ENCODE measurements at regions of chr2 and their contacts with region 1.

Region 1: DNA sequence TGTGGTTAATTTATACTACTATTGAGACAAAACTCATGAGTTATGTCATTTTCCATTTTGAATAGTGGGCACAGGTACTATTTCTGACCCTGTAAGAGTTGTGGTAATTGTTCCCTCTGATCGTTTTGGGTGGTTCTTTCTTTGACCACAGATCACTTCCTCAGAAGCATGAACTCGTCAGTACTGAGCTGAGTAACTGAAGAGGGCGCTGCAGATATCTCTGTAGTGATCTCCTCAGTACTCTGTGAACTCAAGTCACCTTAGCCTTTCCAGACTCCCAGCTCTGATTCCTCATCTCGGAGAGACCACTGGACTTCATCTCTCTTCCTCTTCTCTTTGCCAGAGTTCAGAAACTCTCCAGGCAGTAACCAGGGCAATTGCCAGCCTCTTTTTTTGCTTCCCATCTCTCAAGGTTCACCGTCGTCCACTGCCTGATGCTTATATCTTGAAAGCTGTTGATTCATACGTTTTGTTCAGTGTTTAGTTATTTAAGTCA is 9.4 kb upstream of the IL1RL1 start:
- DNase-seq: peak; percentile 88
- H3K4me3 Mint-ChIP-seq: peak overlapping the region; percentile 67
- H3K27ac Mint-ChIP-seq: peak overlapping the region; percentile 93
- H3K4me1 Mint-ChIP-seq: peaks cover 54% of the 10 kb centered on the region
- H3K27me3 Mint-ChIP-seq: peaks cover 2% of the 10 kb centered on the region

Region 2: DNA sequence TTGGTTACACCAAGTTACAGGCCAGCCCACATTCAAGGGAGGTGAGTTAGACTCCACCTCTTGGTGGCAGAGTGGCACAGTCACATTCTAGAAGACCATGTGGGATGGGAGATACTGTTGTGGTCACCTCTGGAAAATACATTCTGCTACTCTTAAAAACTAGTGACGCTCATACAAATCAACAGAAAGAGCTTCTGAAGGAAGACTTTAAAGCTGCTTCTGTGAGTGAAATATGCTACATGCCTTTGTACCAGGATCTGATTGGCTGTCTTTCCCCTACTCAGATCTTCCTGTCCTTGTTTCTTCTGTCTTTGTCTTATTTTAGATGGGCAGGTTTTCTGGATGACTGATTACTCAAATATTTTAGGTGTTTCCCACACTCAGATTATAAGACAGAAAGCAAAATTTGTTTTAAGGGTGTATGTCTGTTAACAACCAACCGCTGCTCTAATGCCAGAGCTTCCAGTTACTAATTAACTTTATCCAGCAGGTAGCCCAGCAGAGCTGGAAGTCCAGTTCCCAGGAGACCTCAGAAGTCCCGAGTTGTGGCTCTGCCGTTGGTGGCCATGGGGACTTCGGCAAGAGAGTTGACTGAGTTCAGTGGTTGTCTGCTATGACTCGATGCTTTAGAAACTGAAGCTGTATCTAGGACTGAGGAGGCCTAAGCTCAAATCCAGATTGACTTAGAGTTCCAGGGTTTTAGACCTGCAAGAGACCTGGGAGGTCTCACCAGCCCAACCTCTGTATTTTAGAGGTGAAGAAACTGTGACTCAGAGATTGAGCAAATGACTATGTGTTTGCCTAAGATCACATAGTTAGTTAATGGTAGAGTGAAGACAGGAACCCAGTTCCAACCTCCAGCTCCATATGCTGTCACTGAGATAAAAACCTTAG is 302.8 kb before region 1 on chr2:
- intact Hi-C with region 1: loop called (anchors 5 kb)
- DNase-seq: no peak
- H3K4me3 Mint-ChIP-seq: no peak overlapping the region
- H3K27ac Mint-ChIP-seq: peak overlapping the region; percentile 79
- H3K4me1 Mint-ChIP-seq: peaks cover 25% of the 10 kb centered on the region
- H3K27me3 Mint-ChIP-seq: peaks cover 3% of the 10 kb centered on the region

Region 3: DNA sequence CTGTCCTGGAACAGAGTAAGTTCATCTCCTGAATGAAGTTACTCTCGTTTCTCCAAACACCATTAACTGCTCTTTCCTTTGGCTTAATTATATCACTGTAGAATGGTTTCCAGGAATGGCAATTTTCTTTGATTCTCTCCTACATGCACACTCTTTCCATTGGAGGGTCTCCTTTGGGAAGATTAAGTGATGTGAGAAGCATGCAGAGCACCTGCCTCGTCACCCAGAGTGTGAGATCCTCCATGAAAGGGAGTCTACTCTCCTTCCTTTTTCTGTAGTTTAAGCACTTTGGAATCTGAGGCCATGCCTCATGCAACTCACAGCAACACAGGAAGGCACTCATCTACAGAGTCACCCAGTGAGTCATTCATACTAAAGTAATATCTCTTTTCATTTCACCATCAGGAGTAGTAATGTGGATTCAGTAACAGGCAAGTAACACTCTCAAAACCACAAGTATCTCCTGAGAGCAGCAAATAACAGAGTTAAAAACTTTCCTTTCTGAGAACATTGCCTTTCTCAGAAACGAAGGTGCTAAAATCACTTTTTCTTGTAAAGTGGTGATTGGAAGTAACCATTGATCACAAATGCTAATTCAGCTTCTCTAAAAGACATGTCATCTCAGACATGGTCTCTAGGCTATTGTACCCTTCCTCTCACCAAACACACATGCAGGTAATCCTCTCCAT is 43.4 kb before region 1 on chr2:
- intact Hi-C with region 1: loop called (anchors 1 kb)
- DNase-seq: peak; percentile 82
- H3K4me3 Mint-ChIP-seq: peak overlapping the region; percentile 62
- H3K27ac Mint-ChIP-seq: peak overlapping the region; percentile 99
- H3K4me1 Mint-ChIP-seq: peaks cover 43% of the 10 kb centered on the region
- H3K27me3 Mint-ChIP-seq: no peaks in the 10 kb centered on the region

Region 4: GRCh38 chr2:102291318-102292251 is 10.3 kb before region 1 on chr2:
- intact Hi-C with region 1: no loop called
- DNase-seq: peak; percentile 59
- H3K4me3 Mint-ChIP-seq: peak overlapping the region; percentile 40
- H3K27ac Mint-ChIP-seq: peak overlapping the region; percentile 57
- H3K4me1 Mint-ChIP-seq: peaks cover 39% of the 10 kb centered on the region
- H3K27me3 Mint-ChIP-seq: no peaks in the 10 kb centered on the region

Region 5: GRCh38 chr2:102336502-102336945 is 34.6 kb after region 1 on chr2:
- intact Hi-C with region 1: loop called (anchors 2 kb)
- DNase-seq: peak; percentile 38
- H3K4me3 Mint-ChIP-seq: no peak overlapping the region
- H3K27ac Mint-ChIP-seq: no peak overlapping the region
- H3K4me1 Mint-ChIP-seq: peaks cover 8% of the 10 kb centered on the region
- H3K27me3 Mint-ChIP-seq: no peaks in the 10 kb centered on the region

Region 6: GRCh38 chr2:102366406-102367112 is 64.6 kb after region 1 on chr2:
- intact Hi-C with region 1: loop called (anchors 1 kb)
- DNase-seq: peak; percentile 64
- H3K4me3 Mint-ChIP-seq: peak overlapping the region; percentile 73
- H3K27ac Mint-ChIP-seq: peak overlapping the region; percentile 91
- H3K4me1 Mint-ChIP-seq: peaks cover 77% of the 10 kb centered on the region
- H3K27me3 Mint-ChIP-seq: no peaks in the 10 kb centered on the region

Region 7: GRCh38 chr2:102436323-102436722 is 134.4 kb after region 1 on chr2:
- intact Hi-C with region 1: loop called (anchors 2 kb)
- DNase-seq: no peak
- H3K4me3 Mint-ChIP-seq: peak overlapping the region; percentile 43
- H3K27ac Mint-ChIP-seq: peak overlapping the region; percentile 87
- H3K4me1 Mint-ChIP-seq: peaks cover 33% of the 10 kb centered on the region
- H3K27me3 Mint-ChIP-seq: no peaks in the 10 kb centered on the region

Measured in activated CD4-positive, alpha-beta T cell treated with anti-CD3 and anti-CD28 coated beads, Interleukin-2, amount 10 ng/mL, durations not matched to agents 24 days and 14 days (primary cell).